B cell (primary cell): ENCODE measurements at regions of chr3 and their contacts with region 1.

Region 1: GRCh38 chr3:196502775-196503195 is 783 bp downstream of the RNF168 start:
- DNase-seq: peak; percentile 67
- ATAC-seq: peak; percentile 5
- H3K4me3 ChIP-seq: peak overlapping the region; percentile 79 to 87 (median 82)
- H3K4me3 Mint-ChIP-seq: peak overlapping the region; percentile 100
- H3K27ac ChIP-seq: peak overlapping the region; percentile 74 to 83
- H3K27ac Mint-ChIP-seq: peak overlapping the region; percentile 92
- H3K4me1 ChIP-seq: peaks cover 16 to 28% of the 10 kb centered on the region in 2 donors
- H3K4me1 Mint-ChIP-seq: peaks cover 38% of the 10 kb centered on the region
- H3K27me3 ChIP-seq: no peaks in the 10 kb centered on the region
- H3K27me3 Mint-ChIP-seq: no peaks in the 10 kb centered on the region
- CTCF ChIP-seq: no peak

Region 2: GRCh38 chr3:196081791-196082618 is 420.8 kb before region 1 on chr3 and contains the start of gene TFRC:
- CTCF ChIA-PET with region 1: no interaction called
- POLR2A ChIA-PET with region 1: no interaction called
- intact Hi-C with region 1: loop called (anchors 5 kb)
- DNase-seq: peak; percentile 97
- ATAC-seq: peak; percentile 93
- H3K4me3 ChIP-seq: peak within 1 kb of the TSS; percentile 79 to 99 (median 86)
- H3K4me3 Mint-ChIP-seq: peak within 1 kb of the TSS; percentile 93
- H3K27ac ChIP-seq: peak within 1 kb of the TSS; percentile 84 to 97
- H3K27ac Mint-ChIP-seq: peak within 1 kb of the TSS; percentile 96
- H3K4me1 ChIP-seq: peaks cover 25 to 42% of the 10 kb centered on the region in 2 donors
- H3K4me1 Mint-ChIP-seq: peaks cover 44% of the 10 kb centered on the region
- H3K27me3 ChIP-seq: no peaks in the 10 kb centered on the region
- H3K27me3 Mint-ChIP-seq: no peaks in the 10 kb centered on the region
- CTCF ChIP-seq: no peak
- total RNA-seq, gene TFRC: 104 and 117 TPM in 2 replicates

Region 3: DNA sequence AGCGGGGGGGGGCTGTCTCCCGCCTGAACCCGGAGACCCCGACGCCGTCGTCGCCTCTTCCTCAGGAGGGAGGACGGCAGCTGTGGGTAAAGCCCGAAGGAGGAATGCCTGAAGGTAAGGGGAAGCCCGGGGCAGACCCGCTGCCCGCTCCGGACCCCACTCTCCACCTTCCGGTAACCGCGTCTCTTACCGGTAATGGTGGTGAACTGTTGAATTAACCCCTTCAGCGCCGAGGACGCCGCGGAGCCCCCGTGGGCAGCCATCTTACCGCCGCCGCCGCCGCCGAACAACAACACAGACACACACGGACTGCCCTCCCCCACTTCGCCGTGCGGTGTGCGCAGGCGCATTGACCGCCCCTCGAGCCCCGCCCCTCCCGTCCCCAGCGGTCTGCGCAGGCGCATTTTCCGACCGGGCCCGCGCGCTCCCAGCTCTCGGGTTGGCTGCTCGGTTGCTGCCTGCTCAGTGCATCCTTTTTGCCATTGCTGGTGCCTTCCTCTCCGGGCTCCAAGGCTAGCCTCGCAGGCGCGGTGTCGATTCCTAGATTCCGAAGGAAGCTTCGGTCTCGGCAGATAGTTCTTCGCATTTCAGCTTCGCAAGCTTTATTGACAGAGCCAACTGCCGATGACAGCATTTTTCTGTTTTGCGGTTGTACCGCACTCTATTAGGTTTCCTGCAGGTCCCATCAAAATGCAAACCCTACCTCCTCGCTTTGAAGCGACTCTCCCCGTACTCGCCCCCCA is 70.5 kb before region 1 on chr3 and contains the start of gene UBXN7:
- CTCF ChIA-PET with region 1: no interaction called
- POLR2A ChIA-PET with region 1: no interaction called
- intact Hi-C with region 1: loop called (anchors 1 kb)
- DNase-seq: peak; percentile 97
- ATAC-seq: peak; percentile 84
- H3K4me3 ChIP-seq: peak within 1 kb of the TSS; percentile 77 to 100 (median 93)
- H3K4me3 Mint-ChIP-seq: peak within 1 kb of the TSS; percentile 75
- H3K27ac ChIP-seq: peak within 1 kb of the TSS; percentile 88 to 90
- H3K27ac Mint-ChIP-seq: peak within 1 kb of the TSS; percentile 69
- H3K4me1 ChIP-seq: peaks cover 7 to 19% of the 10 kb centered on the region in 2 donors
- H3K4me1 Mint-ChIP-seq: peaks cover 20% of the 10 kb centered on the region
- H3K27me3 ChIP-seq: no peaks in the 10 kb centered on the region
- H3K27me3 Mint-ChIP-seq: no peaks in the 10 kb centered on the region
- CTCF ChIP-seq: no peak
- total RNA-seq, gene UBXN7: 107 and 114 TPM in 2 replicates

Region 4: DNA sequence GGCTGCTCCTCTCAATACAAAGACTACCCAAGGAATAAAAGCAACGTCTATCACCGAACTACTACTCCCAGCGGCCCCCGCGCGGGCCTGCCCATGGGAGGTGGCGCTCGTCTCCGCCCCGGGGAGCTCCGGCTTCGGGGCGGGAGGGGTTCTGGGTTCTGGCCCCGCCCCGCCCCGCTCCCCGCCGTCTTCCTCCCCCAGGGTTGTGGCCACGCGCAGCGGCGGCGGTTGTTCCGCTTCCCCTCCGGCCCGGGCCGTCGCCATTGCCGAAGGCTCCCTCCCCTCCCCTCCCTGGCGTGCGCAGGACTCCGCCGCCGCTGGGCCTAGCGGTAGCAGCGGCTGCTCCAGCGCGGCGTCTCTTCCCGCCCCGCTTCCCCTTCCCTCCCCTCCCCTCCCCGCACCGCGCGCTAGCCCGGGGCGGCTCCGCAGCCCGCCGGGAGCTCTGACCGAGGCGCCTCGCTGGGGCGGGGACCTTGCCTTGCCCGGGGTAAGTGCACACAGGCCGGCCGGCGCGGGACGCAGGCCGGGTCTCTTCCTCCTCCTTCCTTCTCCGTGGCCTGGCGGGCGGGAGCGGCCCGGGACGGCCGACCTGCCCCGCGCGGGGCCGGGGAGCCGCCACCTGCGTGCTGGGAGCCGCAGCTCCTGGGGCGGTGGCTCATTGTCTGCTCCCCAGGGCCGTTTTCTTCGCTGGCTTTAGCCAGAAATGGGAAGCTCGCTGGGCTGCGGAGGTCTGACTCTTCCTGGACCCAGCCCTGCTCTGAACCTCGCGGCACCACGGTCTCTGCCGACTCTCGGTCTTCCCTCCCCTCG is 237.1 kb after region 1 on chr3 and contains the start of gene PAK2:
- CTCF ChIA-PET with region 1: no interaction called
- POLR2A ChIA-PET with region 1: no interaction called
- intact Hi-C with region 1: loop called (anchors 1 kb)
- DNase-seq: peak; percentile 94
- ATAC-seq: peak; percentile 92
- H3K4me3 ChIP-seq: peak within 1 kb of the TSS; percentile 45 to 97 (median 69)
- H3K4me3 Mint-ChIP-seq: peak within 1 kb of the TSS; percentile 100
- H3K27ac ChIP-seq: peak within 1 kb of the TSS; percentile 48 to 96
- H3K27ac Mint-ChIP-seq: peak within 1 kb of the TSS; percentile 98
- H3K4me1 ChIP-seq: peaks cover 21 to 26% of the 10 kb centered on the region in 2 donors
- H3K4me1 Mint-ChIP-seq: peaks cover 28% of the 10 kb centered on the region
- H3K27me3 ChIP-seq: no peaks in the 10 kb centered on the region
- H3K27me3 Mint-ChIP-seq: no peaks in the 10 kb centered on the region
- CTCF ChIP-seq: no peak
- total RNA-seq, gene PAK2: 81.7 and 97.7 TPM in 2 replicates

Region 5: GRCh38 chr3:197298341-197298857 is 795.6 kb after region 1 on chr3 and contains the start of gene DLG1:
- CTCF ChIA-PET with region 1: no interaction called
- POLR2A ChIA-PET with region 1: no interaction called
- intact Hi-C with region 1: loop called (anchors 10 kb)
- DNase-seq: peak; percentile 86
- ATAC-seq: peak; percentile 67
- H3K4me3 ChIP-seq: peak within 1 kb of the TSS; percentile 82 to 97 (median 95)
- H3K4me3 Mint-ChIP-seq: peak within 1 kb of the TSS; percentile 97
- H3K27ac ChIP-seq: peak within 1 kb of the TSS; percentile 69 to 79
- H3K27ac Mint-ChIP-seq: peak within 1 kb of the TSS; percentile 95
- H3K4me1 ChIP-seq: peaks cover 15 to 21% of the 10 kb centered on the region in 2 donors
- H3K4me1 Mint-ChIP-seq: peaks cover 26% of the 10 kb centered on the region
- H3K27me3 ChIP-seq: peaks cover 0 to 19% (median 11%) of the 10 kb centered on the region in 4 experiments
- H3K27me3 Mint-ChIP-seq: peaks cover 26% of the 10 kb centered on the region
- CTCF ChIP-seq: no peak
- total RNA-seq, gene DLG1: 114 and 117 TPM in 2 replicates